Naive thymus-derived CD4-positive, alpha-beta T cell (primary cell): ENCODE measurements at regions of chr19 and their contacts with region 1.

Region 1: GRCh38 chr19:43446746-43447489 is 18.5 kb downstream of the LYPD3 start:
- DNase-seq: peak; percentile 70 to 84 (median 78)
- ATAC-seq: peak; percentile 90
- H3K4me3 ChIP-seq: no peak overlapping the region
- H3K4me3 Mint-ChIP-seq: peak overlapping the region in 1 of 10 donors; percentile 13
- H3K27ac ChIP-seq: no peak overlapping the region
- H3K27ac Mint-ChIP-seq: peak overlapping the region in 8 of 9 donors; percentile 7 to 96 (median 86)
- H3K4me1 ChIP-seq: peaks cover 3 to 4% of the 10 kb centered on the region in 2 donors
- H3K4me1 Mint-ChIP-seq: peaks cover 23 to 46% (median 32%) of the 10 kb centered on the region in 7 donors
- H3K27me3 ChIP-seq: no peaks in the 10 kb centered on the region
- H3K27me3 Mint-ChIP-seq: peaks cover 0 to 2% (median 0%) of the 10 kb centered on the region in 5 donors

Region 2: GRCh38 chr19:43425567-43426392 is 21.1 kb before region 1 on chr19:
- CTCF ChIA-PET with region 1: interaction called, 74 read pairs
- POLR2A ChIA-PET with region 1: no interaction called
- intact Hi-C with region 1: no loop called
- DNase-seq: no peak
- ATAC-seq: no peak
- H3K4me3 ChIP-seq: no peak overlapping the region
- H3K4me3 Mint-ChIP-seq: peak overlapping the region in 2 of 10 donors; percentile 4 to 34
- H3K27ac ChIP-seq: no peak overlapping the region
- H3K27ac Mint-ChIP-seq: peak overlapping the region in 3 of 9 donors; percentile 22 to 51 (median 32)
- H3K4me1 ChIP-seq: no peaks in the 10 kb centered on the region
- H3K4me1 Mint-ChIP-seq: peaks cover 5 to 24% (median 14%) of the 10 kb centered on the region in 7 donors
- H3K27me3 ChIP-seq: no peaks in the 10 kb centered on the region
- H3K27me3 Mint-ChIP-seq: peaks cover 0 to 16% (median 0%) of the 10 kb centered on the region in 5 donors

Region 3: GRCh38 chr19:43433358-43433673 is 13.6 kb before region 1 on chr19:
- CTCF ChIA-PET with region 1: interaction called, 74 read pairs
- POLR2A ChIA-PET with region 1: interaction called, 23 read pairs
- intact Hi-C with region 1: loop called (anchors 1 kb)
- DNase-seq: no peak
- ATAC-seq: no peak
- H3K4me3 ChIP-seq: no peak overlapping the region
- H3K4me3 Mint-ChIP-seq: peak overlapping the region in 1 of 10 donors; percentile 29
- H3K27ac ChIP-seq: no peak overlapping the region
- H3K27ac Mint-ChIP-seq: peak overlapping the region in 8 of 9 donors; percentile 10 to 89 (median 70)
- H3K4me1 ChIP-seq: peaks cover 14 to 27% of the 10 kb centered on the region in 2 donors
- H3K4me1 Mint-ChIP-seq: peaks cover 23 to 59% (median 46%) of the 10 kb centered on the region in 7 donors
- H3K27me3 ChIP-seq: no peaks in the 10 kb centered on the region
- H3K27me3 Mint-ChIP-seq: peaks cover 0 to 2% (median 0%) of the 10 kb centered on the region in 5 donors

Region 4: DNA sequence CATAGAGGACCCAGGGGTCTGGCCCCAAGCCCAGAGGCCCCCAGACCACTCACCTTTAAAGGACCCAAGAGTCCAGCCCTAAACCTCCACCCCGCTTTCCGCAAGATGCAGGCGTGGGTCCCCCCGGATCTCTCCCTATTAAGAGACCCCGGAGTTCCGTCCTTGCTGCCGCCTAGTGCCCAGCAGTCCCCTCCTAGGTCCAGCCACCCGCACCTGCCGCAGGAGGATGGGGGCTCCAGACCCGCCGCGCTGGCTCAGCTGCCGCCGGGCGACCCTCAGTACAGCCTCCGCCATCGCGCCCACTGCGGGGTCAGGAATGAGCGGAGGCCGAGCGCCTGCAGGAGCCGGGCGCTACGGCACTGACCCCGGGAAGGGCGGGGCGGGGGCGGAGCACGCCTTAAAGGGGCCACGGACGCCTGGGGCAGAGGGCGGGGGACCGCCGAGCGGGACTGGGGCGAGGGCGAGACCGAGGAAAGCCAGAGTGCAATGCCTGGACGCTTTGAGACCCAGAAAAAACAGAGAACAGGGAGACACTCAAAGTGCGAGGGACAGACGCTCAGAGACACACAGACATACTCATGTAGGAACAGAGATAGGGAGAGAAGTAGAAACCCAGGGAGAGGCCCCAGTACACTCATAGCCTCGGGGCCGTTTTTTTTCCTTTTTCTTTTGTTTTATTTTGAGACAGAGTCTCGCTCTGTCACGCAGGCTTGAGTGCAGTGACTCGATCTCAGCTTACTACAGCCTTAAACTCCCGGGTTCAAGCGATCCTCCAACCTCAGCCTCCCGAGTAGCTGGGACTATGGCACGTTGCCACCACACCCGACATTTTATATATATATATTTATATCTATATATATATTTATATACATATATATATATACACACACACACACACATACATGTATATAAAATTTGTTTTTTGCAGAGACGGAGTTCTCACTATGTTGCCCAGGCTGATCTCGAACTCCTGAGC is 80.3 kb after region 1 on chr19 and contains the start of gene ETHE1:
- CTCF ChIA-PET with region 1: interaction called, 250 read pairs
- POLR2A ChIA-PET with region 1: interaction called, 8 read pairs
- intact Hi-C with region 1: no loop called
- DNase-seq: peak; percentile 39 to 86 (median 50)
- ATAC-seq: peak; percentile 86
- H3K4me3 ChIP-seq: peak within 1 kb of the TSS; percentile 75
- H3K4me3 Mint-ChIP-seq: peak within 1 kb of the TSS; percentile 78 to 94 (median 84)
- H3K27ac ChIP-seq: peak within 1 kb of the TSS; percentile 81
- H3K27ac Mint-ChIP-seq: peak within 1 kb of the TSS; percentile 75 to 96 (median 86)
- H3K4me1 ChIP-seq: peaks cover 15 to 24% of the 10 kb centered on the region in 2 donors
- H3K4me1 Mint-ChIP-seq: peaks cover 18 to 38% (median 25%) of the 10 kb centered on the region in 7 donors
- H3K27me3 ChIP-seq: no peaks in the 10 kb centered on the region
- H3K27me3 Mint-ChIP-seq: no peaks in the 10 kb centered on the region
- total RNA-seq, gene ETHE1: 20.3 to 58.6 (median 23.9) TPM

Region 5: GRCh38 chr19:43651758-43652545 is 205.0 kb after region 1 on chr19:
- CTCF ChIA-PET with region 1: no interaction called
- POLR2A ChIA-PET with region 1: no interaction called
- intact Hi-C with region 1: loop called in 1 of 2 experiments (anchors 5 kb)
- DNase-seq: peak in 2 of 9 donors; percentile 28 to 37
- ATAC-seq: peak; percentile 48
- H3K4me3 ChIP-seq: no peak overlapping the region
- H3K4me3 Mint-ChIP-seq: no peak overlapping the region
- H3K27ac ChIP-seq: no peak overlapping the region
- H3K27ac Mint-ChIP-seq: peak overlapping the region in 1 of 9 donors; percentile 9
- H3K4me1 ChIP-seq: no peaks in the 10 kb centered on the region
- H3K4me1 Mint-ChIP-seq: peaks cover 0 to 5% (median 0%) of the 10 kb centered on the region in 7 donors
- H3K27me3 ChIP-seq: no peaks in the 10 kb centered on the region
- H3K27me3 Mint-ChIP-seq: no peaks in the 10 kb centered on the region